HCT116 (cell line): ENCODE measurements at regions of chr5 and their contacts with region 1.

Region 1: GRCh38 chr5:139633295-139634027 is 14.7 kb upstream of the CXXC5 start:
- DNase-seq: no peak
- ATAC-seq: peak; percentile 56
- H3K4me3 ChIP-seq: no peak overlapping the region
- H3K27ac ChIP-seq: no peak overlapping the region
- H3K4me1 ChIP-seq: peaks cover 29 to 37% of the 10 kb centered on the region in 2 experiments
- H3K27me3 ChIP-seq: no peaks in the 10 kb centered on the region
- CTCF ChIP-seq: peak in 2 of 3 experiments; percentile 99; a peak in 4 of 6 replicates
- POLR2A ChIP-seq: no peak
- RAD21 ChIP-seq: no peak

Region 2: GRCh38 chr5:139422307-139422893 is 211.1 kb before region 1 on chr5:
- CTCF ChIA-PET with region 1: interaction called, 13 read pairs
- POLR2A ChIA-PET with region 1: no interaction called
- RAD21 ChIA-PET with region 1: no interaction called
- intact Hi-C with region 1: loop called (anchors 2 kb)
- DNase-seq: peak; percentile 48
- ATAC-seq: peak; percentile 89
- H3K4me3 ChIP-seq: no peak overlapping the region
- H3K27ac ChIP-seq: no peak overlapping the region
- H3K4me1 ChIP-seq: peaks cover 0 to 7% of the 10 kb centered on the region in 2 experiments; a peak in 3 of 4 replicates
- H3K27me3 ChIP-seq: no peaks in the 10 kb centered on the region
- CTCF ChIP-seq: peak; percentile 78 to 95 (median 95)
- POLR2A ChIP-seq: no peak
- RAD21 ChIP-seq: peak; percentile 96

Region 3: GRCh38 chr5:139648205-139649081 is 15.0 kb after region 1 on chr5 and contains the start of gene CXXC5:
- CTCF ChIA-PET with region 1: interaction called, 56 read pairs
- POLR2A ChIA-PET with region 1: interaction called, 62 read pairs
- RAD21 ChIA-PET with region 1: interaction called, 16 to 31 read pairs
- intact Hi-C with region 1: loop called (anchors 1 kb)
- DNase-seq: no peak
- ATAC-seq: peak; percentile 57
- H3K4me3 ChIP-seq: peak within 1 kb of the TSS; percentile 80 to 84
- H3K27ac ChIP-seq: peak within 1 kb of the TSS; percentile 88
- H3K4me1 ChIP-seq: peaks cover 52 to 63% of the 10 kb centered on the region in 2 experiments
- H3K27me3 ChIP-seq: no peaks in the 10 kb centered on the region
- CTCF ChIP-seq: no peak
- POLR2A ChIP-seq: no peak
- RAD21 ChIP-seq: no peak
- total RNA-seq, gene CXXC5: 43.1 TPM

Region 4: GRCh38 chr5:139660923-139661814 is 27.7 kb after region 1 on chr5:
- CTCF ChIA-PET with region 1: interaction called, 10 read pairs
- POLR2A ChIA-PET with region 1: interaction called, 11 read pairs
- RAD21 ChIA-PET with region 1: interaction called in 1 of 2 experiments, 3 read pairs
- intact Hi-C with region 1: no loop called
- DNase-seq: peak; percentile 63
- ATAC-seq: peak; percentile 76
- H3K4me3 ChIP-seq: peak overlapping the region; percentile 42 to 53
- H3K27ac ChIP-seq: peak overlapping the region; percentile 97
- H3K4me1 ChIP-seq: peaks cover 72 to 87% of the 10 kb centered on the region in 2 experiments
- H3K27me3 ChIP-seq: no peaks in the 10 kb centered on the region
- CTCF ChIP-seq: no peak
- POLR2A ChIP-seq: no peak
- RAD21 ChIP-seq: no peak

Region 5: DNA sequence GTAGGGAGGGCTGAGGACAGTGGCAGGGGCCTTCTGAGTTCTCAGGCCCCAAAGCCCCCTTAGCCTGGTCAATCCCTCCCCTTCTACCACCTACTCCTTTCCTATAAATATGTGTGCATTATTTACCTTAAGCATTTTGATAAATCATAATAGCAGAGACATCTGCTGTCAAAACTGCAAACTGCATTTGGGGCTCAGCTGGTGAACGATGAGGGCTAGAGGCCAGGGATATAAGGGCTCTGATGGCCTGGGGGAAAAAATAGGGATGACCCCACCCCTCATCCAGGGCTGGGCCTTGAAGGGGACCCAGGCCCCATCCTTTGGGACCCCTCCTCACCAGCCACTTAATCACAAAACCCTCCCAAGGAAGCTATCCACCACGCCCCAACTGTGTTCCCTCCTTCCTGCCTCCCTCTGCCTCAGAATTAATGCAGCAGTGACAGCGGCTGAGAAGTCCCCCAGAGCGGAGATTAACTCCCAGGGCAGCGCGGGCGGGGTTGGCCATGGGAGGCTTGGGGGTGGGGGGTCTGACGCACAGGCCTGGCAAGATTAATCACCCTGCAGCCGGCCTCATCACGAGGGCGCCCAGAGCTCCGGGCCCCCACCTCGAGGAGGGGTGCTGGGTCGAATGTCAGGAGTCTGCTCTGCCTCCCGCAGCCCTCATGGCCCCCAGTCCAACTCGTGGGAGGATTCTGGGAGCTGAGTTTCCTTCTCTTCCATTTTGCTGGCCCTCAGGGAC is 56.8 kb after region 1 on chr5:
- CTCF ChIA-PET with region 1: interaction called, 81 read pairs
- POLR2A ChIA-PET with region 1: no interaction called
- RAD21 ChIA-PET with region 1: interaction called, 6 to 7 read pairs
- intact Hi-C with region 1: loop called (anchors 1 kb)
- DNase-seq: no peak
- ATAC-seq: peak; percentile 58
- H3K4me3 ChIP-seq: no peak overlapping the region
- H3K27ac ChIP-seq: no peak overlapping the region; the same call in 1 of the 2 replicates
- H3K4me1 ChIP-seq: peaks cover 4 to 16% of the 10 kb centered on the region in 2 experiments; a peak in 3 of 4 replicates
- H3K27me3 ChIP-seq: no peaks in the 10 kb centered on the region
- CTCF ChIP-seq: peak in 2 of 3 experiments; percentile 46 to 62; a peak in 4 of 6 replicates
- POLR2A ChIP-seq: no peak
- RAD21 ChIP-seq: no peak

Region 6: DNA sequence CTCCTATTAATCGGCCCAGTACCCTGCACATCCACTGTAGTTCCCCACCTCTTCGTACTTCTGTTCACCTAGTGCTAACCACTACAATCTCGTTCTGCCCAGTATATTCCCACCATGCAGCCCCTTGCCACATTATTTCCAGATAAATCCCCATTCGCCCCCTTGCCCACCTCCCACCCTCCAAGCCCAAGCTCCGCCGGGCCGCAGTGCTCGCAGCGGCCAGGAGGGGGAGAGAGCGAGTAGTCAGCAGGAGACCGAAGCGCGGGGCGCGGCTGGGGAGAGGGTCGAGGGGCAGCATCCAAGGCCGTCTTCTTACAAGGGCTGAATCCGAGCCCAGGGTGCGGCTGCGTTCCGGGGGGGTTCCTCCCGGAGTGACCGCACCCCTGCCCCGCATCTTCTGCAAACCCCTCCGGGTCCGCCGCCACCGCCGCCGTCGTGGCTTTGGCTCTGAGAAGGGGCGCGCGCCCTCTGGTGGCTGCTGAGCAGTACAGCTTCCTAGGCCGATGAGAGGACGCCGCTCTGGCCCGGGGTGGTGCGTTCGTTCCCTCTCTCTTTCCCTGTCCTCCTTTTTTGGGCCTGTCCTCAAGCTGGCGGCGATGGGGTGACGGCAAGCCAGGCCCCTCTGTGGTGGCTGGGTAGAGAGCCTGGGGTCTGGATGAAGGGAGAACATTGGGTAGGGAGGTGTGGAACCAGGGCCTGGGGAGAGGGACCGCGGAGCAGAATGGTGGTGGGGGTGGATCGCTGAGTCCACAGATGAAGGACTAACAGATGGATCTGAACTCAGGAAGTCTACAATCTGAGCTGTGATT is 132.2 kb after region 1 on chr5:
- CTCF ChIA-PET with region 1: interaction called, 78 read pairs
- POLR2A ChIA-PET with region 1: no interaction called
- RAD21 ChIA-PET with region 1: interaction called, 8 to 9 read pairs
- intact Hi-C with region 1: loop called (anchors 1 kb)
- DNase-seq: no peak
- ATAC-seq: peak; percentile 91
- H3K4me3 ChIP-seq: peak overlapping the region; percentile 43 to 52
- H3K27ac ChIP-seq: peak overlapping the region; percentile 51; the same call in 1 of the 2 replicates
- H3K4me1 ChIP-seq: peaks cover 15 to 36% of the 10 kb centered on the region in 2 experiments; a peak in 3 of 4 replicates
- H3K27me3 ChIP-seq: no peaks in the 10 kb centered on the region
- CTCF ChIP-seq: peak in 2 of 3 experiments; percentile 83 to 95; a peak in 4 of 6 replicates
- POLR2A ChIP-seq: no peak
- RAD21 ChIP-seq: no peak

Region 7: DNA sequence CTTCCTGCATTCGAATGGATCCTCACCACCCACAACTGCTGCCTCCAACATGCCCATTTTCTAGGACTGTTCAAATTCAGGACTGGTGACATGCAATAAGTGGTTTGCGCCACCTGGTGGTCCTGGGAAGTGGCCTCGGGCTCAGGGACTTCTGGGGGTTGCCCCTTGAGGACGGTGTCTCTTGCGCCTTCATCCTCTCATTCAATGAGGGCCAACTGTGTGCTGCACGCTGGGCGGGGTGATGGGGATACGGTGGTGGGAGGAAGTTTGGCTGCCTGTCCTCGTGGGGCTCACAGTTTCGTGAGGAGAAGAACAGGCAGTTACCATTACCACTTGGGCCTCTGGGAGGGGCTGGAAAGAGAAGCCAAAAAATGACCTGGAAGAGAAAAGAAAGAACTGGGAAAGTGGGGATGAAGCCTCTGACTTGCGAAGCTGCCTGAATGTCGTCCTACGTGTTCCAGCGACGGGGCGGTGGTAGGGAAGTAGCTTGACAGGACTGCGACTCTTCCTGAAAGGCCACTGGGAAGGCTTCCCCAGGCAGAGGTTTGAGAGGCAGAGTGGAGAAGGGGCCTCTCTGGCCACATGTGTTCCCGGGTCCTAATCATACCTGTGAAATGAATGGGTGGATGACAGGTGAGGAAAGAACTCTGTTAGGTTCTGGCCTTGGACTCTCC is 211.1 kb after region 1 on chr5:
- CTCF ChIA-PET with region 1: no interaction called
- POLR2A ChIA-PET with region 1: no interaction called
- RAD21 ChIA-PET with region 1: no interaction called
- intact Hi-C with region 1: loop called (anchors 10 kb)
- DNase-seq: peak; percentile 79
- ATAC-seq: peak; percentile 74
- H3K4me3 ChIP-seq: no peak overlapping the region
- H3K27ac ChIP-seq: no peak overlapping the region
- H3K4me1 ChIP-seq: peaks cover 0 to 13% of the 10 kb centered on the region in 2 experiments; a peak in 2 of 4 replicates
- H3K27me3 ChIP-seq: no peaks in the 10 kb centered on the region
- CTCF ChIP-seq: peak; percentile 92 to 96 (median 95)
- POLR2A ChIP-seq: no peak
- RAD21 ChIP-seq: peak; percentile 88

Region 8: DNA sequence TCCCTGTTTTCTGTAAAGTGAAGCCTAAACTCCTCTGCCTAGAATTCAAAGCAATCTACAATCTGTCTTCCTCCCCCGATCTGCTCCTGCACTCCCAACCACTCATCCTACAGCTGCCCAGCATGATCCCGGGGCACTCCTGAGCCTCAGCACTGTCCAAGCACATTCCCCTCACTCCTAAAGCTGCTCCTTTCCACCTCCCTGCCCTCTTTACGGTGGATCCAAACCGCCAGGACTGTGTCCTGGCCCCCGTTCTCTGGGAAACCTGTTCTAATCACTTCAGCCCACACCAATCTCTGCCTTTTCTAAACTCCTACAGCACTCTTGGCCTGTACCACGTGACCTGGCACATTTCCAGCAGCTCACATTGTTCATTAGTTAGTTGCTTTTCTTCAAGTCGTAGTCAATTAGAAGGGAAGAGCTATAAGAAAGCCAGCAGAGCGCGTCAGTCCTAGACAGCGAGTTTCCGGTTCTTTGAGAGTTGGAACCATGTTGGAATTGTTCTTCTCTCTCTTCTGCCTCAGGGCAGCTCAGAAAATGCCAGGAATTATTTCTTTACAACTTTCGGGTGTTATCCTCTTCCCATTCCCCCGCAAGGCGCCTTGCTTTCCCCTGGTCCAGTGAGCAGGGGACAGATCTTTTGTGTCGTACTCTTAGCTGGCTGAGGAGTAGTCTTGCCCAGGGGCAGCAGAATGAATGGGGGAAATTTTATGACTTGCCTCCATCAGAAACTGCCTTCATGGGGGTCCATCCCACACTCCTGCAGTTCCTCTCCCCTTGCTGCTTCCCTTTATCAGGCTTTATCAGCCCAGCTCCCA is 348.9 kb after region 1 on chr5:
- CTCF ChIA-PET with region 1: no interaction called
- POLR2A ChIA-PET with region 1: no interaction called
- RAD21 ChIA-PET with region 1: no interaction called
- intact Hi-C with region 1: no loop called
- DNase-seq: no peak
- ATAC-seq: no peak
- H3K4me3 ChIP-seq: no peak overlapping the region
- H3K27ac ChIP-seq: no peak overlapping the region
- H3K4me1 ChIP-seq: peaks cover 20 to 43% of the 10 kb centered on the region in 2 experiments
- H3K27me3 ChIP-seq: no peaks in the 10 kb centered on the region
- CTCF ChIP-seq: no peak
- POLR2A ChIP-seq: no peak
- RAD21 ChIP-seq: no peak

Region 9: GRCh38 chr5:140145818-140146522 is 512.5 kb after region 1 on chr5:
- CTCF ChIA-PET with region 1: no interaction called
- POLR2A ChIA-PET with region 1: no interaction called
- RAD21 ChIA-PET with region 1: no interaction called
- intact Hi-C with region 1: no loop called
- DNase-seq: no peak
- ATAC-seq: peak; percentile 83
- H3K4me3 ChIP-seq: peak overlapping the region; percentile 11 to 35; a peak in 3 of 4 replicates
- H3K27ac ChIP-seq: no peak overlapping the region
- H3K4me1 ChIP-seq: peaks cover 4 to 19% of the 10 kb centered on the region in 2 experiments; a peak in 3 of 4 replicates
- H3K27me3 ChIP-seq: no peaks in the 10 kb centered on the region
- CTCF ChIP-seq: peak; percentile 35 to 63 (median 59); a peak in 5 of 6 replicates
- POLR2A ChIP-seq: no peak
- RAD21 ChIP-seq: peak; percentile 35